Spleen (tissue), 13 donors: ENCODE measurements at regions of chr2 and their contacts with region 1.

Region 1: GRCh38 chr2:240232961-240233893 is 92.8 kb upstream of the OTOS start:
- DNase-seq: peak; percentile 89
- H3K4me3 ChIP-seq: peak overlapping the region in 3 of 8 donors; percentile 5 to 60 (median 26)
- H3K27ac ChIP-seq: peak overlapping the region in 2 of 8 donors; percentile 21 to 40
- H3K4me1 ChIP-seq: peaks cover 6 to 37% (median 19%) of the 10 kb centered on the region in 6 donors
- H3K27me3 ChIP-seq: peaks cover 0 to 44% (median 0%) of the 10 kb centered on the region in 7 donors
- CTCF ChIP-seq: peak; percentile 32 to 87 (median 77)
- POLR2A ChIP-seq: no peak

Region 2: DNA sequence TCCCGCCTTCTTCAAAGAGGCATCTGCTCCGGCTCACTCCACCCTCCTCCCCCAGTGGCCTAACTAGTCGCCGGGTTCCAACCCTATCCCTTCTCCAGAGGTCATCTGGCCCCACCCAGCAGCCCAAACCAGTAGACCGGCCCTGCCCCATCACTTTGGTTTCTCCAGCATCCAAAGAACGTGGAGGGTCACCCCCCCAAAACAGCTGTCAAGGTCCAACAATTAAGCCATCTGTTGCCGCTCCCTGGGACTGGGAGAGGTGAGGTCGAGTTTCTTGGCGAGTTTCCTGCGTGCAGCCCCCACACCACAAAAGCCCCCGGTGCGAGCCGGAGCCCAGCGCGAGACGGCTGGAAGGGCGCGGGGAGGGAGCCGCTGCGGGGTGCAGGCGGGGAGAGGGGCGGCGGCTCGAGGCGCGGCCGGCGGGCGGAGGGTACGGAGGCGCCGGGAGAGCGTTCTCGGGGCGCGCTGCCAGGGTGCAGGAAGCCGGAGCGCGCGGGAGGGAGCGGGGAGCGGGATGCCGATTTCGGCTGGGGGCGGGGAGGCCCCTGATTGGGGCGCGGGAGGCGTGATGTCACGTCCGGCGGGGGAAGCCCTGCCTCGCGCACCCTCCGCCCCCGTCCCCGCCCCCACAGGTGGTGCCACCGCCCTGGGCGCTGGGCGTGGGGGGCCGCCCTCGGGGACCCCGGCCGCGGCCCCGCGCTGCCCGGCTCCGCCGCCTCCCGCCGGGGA is 201.7 kb after region 1 on chr2:
- intact Hi-C with region 1: loop called (anchors 1 kb)
- DNase-seq: peak; percentile 95
- H3K4me3 ChIP-seq: peak overlapping the region; percentile 45 to 81 (median 63)
- H3K27ac ChIP-seq: peak overlapping the region in 6 of 8 donors; percentile 58 to 87 (median 78)
- H3K4me1 ChIP-seq: peaks cover 0 to 46% (median 29%) of the 10 kb centered on the region in 6 donors
- H3K27me3 ChIP-seq: peaks cover 0 to 70% (median 35%) of the 10 kb centered on the region in 7 donors
- CTCF ChIP-seq: no peak
- POLR2A ChIP-seq: no peak